ENCODE measurements at regions of chr17 and their contacts with region 1.

Region 1: GRCh38 chr17:65198653-65199382 is 61.6 kb downstream of the RGS9 start:
- DNase-seq: peak in 4 of 14 experiments; percentile 20 to 76 (median 72)
- ATAC-seq: peak; percentile 70
- H3K4me3 ChIP-seq: no peak overlapping the region
- H3K4me3 Mint-ChIP-seq: no peak overlapping the region
- H3K27ac ChIP-seq: no peak overlapping the region
- H3K27ac Mint-ChIP-seq: no peak overlapping the region
- H3K4me1 ChIP-seq: peaks cover 6% of the 10 kb centered on the region
- H3K4me1 Mint-ChIP-seq: no peaks in the 10 kb centered on the region
- H3K27me3 ChIP-seq: no peaks in the 10 kb centered on the region
- H3K27me3 Mint-ChIP-seq: no peaks in the 10 kb centered on the region
- CTCF ChIP-seq: peak; percentile 88

Region 2: DNA sequence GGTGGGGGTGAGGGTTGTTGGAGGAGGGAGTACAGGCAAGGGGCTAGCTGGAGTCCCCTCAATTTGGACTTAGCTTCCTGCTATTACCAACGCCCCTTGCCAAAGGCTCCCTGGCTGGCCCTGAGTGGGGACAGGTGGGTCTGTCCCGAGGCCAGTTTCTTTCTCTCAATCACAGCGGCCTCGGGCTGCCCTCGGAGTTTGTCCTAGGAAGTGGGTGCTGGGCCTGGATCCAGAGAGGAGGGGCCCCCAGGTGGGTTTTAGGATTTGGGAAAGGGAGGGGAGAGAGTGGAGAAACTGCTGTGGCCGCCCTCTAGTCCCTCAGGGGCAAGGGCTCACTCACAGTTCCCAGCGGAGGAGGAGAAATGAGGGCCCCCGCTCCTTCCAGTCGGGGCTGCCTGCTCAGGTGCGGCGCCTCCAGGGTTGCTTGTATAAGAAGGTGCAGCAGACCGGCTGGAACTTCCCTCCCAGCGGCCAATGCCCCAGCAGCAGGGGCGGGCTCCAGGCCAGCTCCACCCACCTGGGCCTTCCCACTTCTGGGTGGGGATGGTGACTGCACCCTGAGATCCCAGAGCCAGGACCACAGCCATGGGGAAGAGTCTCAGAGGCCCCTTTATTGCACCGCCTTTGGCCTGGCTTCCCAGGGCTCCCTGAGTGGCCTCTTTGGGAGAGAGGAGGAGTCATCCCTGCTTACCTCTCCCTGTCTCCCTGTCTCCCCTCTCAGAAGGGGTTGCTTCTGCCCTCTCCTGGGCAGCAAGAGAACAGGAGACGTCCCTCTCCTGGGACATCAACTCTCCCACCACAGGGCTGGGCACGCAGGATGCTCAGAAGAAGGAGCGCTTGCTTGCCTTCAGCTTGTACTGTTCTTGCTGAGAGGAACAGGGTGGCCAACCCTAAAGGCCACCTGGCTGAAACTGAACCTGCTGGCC is 424.7 kb before region 1 on chr17:
- CTCF ChIA-PET with region 1: no interaction called
- POLR2A ChIA-PET with region 1: no interaction called
- intact Hi-C with region 1: loop called (anchors 5 kb)
- DNase-seq: peak in 1 of 14 experiments; percentile 32
- ATAC-seq: no peak
- H3K4me3 ChIP-seq: no peak overlapping the region
- H3K4me3 Mint-ChIP-seq: no peak overlapping the region
- H3K27ac ChIP-seq: no peak overlapping the region
- H3K27ac Mint-ChIP-seq: no peak overlapping the region
- H3K4me1 ChIP-seq: peaks cover 34% of the 10 kb centered on the region
- H3K4me1 Mint-ChIP-seq: peaks cover 17% of the 10 kb centered on the region
- H3K27me3 ChIP-seq: no peaks in the 10 kb centered on the region
- H3K27me3 Mint-ChIP-seq: peaks cover 15% of the 10 kb centered on the region
- CTCF ChIP-seq: no peak

Region 3: GRCh38 chr17:65137021-65137991 is 61.5 kb before region 1 on chr17 and contains the start of gene RGS9:
- CTCF ChIA-PET with region 1: no interaction called
- POLR2A ChIA-PET with region 1: no interaction called
- intact Hi-C with region 1: loop called (anchors 5 kb)
- DNase-seq: peak; percentile 68 to 93 (median 80)
- ATAC-seq: peak; percentile 97
- H3K4me3 ChIP-seq: peak within 1 kb of the TSS; percentile 51
- H3K4me3 Mint-ChIP-seq: peak within 1 kb of the TSS; percentile 78
- H3K27ac ChIP-seq: no peak within 1 kb of the TSS
- H3K27ac Mint-ChIP-seq: no peak within 1 kb of the TSS
- H3K4me1 ChIP-seq: peaks cover 30% of the 10 kb centered on the region
- H3K4me1 Mint-ChIP-seq: peaks cover 20% of the 10 kb centered on the region
- H3K27me3 ChIP-seq: peaks cover 2 to 7% of the 10 kb centered on the region in 2 experiments
- H3K27me3 Mint-ChIP-seq: peaks cover 18% of the 10 kb centered on the region
- CTCF ChIP-seq: peak; percentile 91
- total RNA-seq, gene RGS9: 0.60 to 0.73 TPM

Measured in CD4-positive, alpha-beta T cell (primary cell).